Left cardiac atrium (tissue), 4 donors: ENCODE measurements at regions of chr14 and their contacts with region 1.

Region 1: DNA sequence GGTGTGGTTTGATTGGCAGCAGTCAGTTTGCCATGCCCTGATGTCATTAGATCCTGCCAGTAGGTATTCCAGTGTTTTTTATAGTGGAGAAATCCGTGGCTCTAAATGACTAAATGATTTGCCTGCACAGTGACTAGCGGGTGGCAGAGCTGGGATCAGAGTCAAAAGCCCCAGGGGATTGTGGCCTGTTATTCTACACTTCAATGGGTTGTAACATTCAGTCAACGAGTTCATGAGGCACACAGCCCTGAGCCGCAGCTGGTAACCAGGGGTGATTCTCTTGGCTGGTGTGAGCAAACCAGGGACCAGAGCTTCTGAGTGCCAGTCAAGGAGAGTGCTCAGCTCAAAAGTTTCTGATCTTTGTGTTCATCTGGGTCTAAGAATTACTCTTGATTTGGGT is 1.8 kb downstream of the MYH6 start:
- DNase-seq: no peak
- ATAC-seq: no peak

Region 2: GRCh38 chr14:23228812-23229211 is 177.4 kb before region 1 on chr14:
- intact Hi-C with region 1: no loop called
- DNase-seq: no peak
- ATAC-seq: no peak

Region 3: GRCh38 chr14:23446291-23446851 is 40.1 kb after region 1 on chr14:
- intact Hi-C with region 1: loop called (anchors 1 to 5 kb)
- DNase-seq: peak; percentile 48
- ATAC-seq: peak; percentile 39 to 59

Region 4: DNA sequence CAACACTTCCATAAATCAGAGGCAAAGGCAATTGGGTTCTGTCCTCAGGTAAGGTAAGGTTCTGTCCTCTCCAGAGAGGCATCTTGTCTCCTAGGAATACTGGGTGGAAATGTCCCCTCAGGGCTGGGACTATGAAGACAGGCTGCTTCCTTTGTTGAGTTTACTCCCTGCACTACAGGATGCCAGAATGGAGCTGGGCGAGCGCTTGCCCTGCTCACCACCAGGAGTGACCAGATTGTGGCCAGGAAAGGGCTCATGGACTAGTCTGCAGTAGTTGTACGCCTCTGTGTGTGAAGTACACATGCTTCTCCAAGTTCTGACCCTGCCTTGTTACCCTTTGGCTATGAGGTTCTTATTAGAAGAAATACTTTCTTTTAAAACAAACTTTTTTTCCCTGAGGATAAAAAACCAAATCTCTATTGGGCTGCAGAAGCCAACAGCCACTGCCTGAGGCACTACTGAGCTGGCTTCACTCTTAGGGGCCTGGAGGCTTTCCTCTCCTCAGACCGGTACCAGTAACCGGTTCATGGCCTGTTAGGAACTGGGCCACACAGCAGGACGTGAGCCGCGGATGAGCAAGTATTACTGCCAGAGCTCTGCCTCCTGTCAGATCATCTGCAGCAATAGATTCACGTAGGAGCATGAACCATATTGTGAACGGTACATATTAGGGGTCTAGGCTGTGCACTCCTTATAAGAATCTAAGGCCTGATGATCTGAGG is 313.1 kb after region 1 on chr14:
- intact Hi-C with region 1: no loop called
- DNase-seq: no peak
- ATAC-seq: no peak